Spleen (tissue), 13 donors: ENCODE measurements at regions of chr2 and their contacts with region 1.

Region 1: DNA sequence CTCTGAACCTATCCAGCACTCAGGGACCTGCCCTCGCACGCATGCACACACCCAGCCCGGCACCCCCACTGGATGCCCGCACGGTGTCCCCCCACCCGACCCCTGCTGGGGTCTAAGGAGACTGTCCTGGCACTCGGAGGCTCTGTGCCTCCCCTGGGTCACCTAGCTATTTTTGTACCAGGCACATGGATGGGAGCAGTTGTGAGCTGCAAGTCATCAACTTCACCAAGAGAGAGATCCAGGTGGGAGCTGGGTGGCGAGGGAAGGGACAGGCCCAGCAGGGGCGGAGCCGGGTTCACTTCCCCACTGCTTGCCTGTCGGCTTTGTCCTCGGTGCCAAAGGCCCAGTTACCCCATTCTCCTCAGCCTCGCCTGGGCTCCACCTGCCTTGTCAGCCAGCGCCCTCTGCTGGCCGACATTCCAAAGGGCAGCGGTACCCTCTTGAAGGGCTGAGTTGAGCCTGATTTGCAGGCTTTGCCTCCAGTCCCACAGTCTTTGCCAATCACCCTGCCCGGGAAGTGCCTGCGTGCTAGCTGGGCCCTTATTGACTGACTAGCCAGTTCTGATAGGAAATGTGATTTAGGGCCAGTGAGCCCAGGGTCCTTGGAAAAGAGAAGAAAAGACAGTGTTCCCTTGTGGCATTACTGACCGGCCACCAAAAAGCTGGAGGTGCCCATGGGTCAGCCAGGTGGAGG is 5.8 kb downstream of the NT5DC4 start:
- DNase-seq: peak; percentile 99
- H3K4me3 ChIP-seq: no peak overlapping the region
- H3K27ac ChIP-seq: peak overlapping the region in 1 of 8 donors; percentile 65
- H3K4me1 ChIP-seq: peaks cover 6 to 61% (median 29%) of the 10 kb centered on the region in 6 donors
- H3K27me3 ChIP-seq: no peaks in the 10 kb centered on the region
- CTCF ChIP-seq: peak; percentile 93 to 99 (median 98)
- POLR2A ChIP-seq: no peak

Region 2: DNA sequence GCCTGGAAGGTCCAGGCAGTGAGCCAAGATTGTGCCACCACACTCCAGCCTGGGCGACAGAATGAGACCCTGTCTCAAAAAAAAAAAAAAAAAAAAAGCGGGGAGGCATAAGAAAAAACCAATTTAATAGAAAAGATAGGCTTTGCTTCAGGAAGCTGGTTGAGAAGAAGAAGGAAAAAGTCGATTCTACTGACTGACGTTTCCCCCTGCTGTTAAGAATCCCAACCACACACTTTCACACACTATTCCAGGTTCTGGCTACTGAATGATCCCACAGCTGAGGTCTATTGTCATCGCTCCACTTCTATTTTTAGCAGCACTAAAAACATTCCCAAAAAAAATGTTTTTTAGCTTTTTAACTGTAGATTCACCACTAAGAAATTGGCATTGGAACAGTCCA is 148.9 kb before region 1 on chr2:
- intact Hi-C with region 1: no loop called
- DNase-seq: no peak
- H3K4me3 ChIP-seq: no peak overlapping the region
- H3K27ac ChIP-seq: no peak overlapping the region
- H3K4me1 ChIP-seq: peaks cover 0 to 7% (median 3%) of the 10 kb centered on the region in 6 donors
- H3K27me3 ChIP-seq: no peaks in the 10 kb centered on the region
- CTCF ChIP-seq: no peak
- POLR2A ChIP-seq: no peak

Region 3: DNA sequence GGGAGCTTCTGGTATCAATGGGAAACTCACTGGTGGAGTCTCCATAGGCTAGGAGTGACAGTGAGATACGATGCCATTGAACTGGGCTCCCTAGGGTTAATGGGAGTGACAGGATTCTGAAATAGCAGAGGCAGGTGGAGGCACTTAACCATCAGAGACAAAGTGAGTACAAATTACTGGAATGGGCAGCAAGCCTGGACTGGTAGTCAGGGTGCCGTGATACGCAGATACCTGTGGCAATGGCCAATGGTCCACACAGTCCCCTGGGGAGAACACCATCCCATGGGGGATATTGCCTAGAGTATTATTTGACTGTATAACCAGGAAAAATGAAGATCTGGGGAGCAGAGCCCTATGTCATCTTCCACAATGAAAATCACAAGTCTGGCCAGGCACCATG is 124.9 kb before region 1 on chr2:
- intact Hi-C with region 1: loop called (anchors 5 kb)
- DNase-seq: peak; percentile 35
- H3K4me3 ChIP-seq: no peak overlapping the region
- H3K27ac ChIP-seq: no peak overlapping the region
- H3K4me1 ChIP-seq: peaks cover 6 to 12% (median 8%) of the 10 kb centered on the region in 6 donors
- H3K27me3 ChIP-seq: no peaks in the 10 kb centered on the region
- CTCF ChIP-seq: no peak
- POLR2A ChIP-seq: no peak

Region 4: DNA sequence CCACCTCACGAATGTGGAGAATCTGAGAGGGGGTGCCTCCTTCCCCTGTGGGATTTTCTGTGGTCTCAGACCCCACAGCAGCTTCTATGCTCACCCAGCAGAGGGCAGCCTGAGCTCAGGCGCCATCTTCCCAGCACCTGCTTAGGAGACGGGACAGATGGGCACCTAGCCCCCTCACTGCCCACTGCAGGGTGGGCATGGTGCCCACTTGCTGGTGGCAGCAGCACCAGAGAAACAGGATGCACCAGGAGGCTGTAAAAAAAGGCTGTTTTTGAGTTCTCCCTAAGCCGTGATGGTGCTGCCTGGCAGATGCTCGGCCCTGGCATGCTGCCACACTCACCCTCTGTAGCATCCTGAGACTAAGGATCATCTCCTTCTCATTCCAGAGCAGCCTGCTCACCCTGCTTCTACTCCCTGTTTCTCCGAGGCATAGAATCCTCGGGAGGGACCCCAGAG is 100.0 kb before region 1 on chr2:
- intact Hi-C with region 1: loop called (anchors 5 kb)
- DNase-seq: peak; percentile 91
- H3K4me3 ChIP-seq: peak overlapping the region in 5 of 8 donors; percentile 1 to 60 (median 21)
- H3K27ac ChIP-seq: peak overlapping the region in 7 of 8 donors; percentile 36 to 83 (median 66)
- H3K4me1 ChIP-seq: peaks cover 10 to 72% (median 47%) of the 10 kb centered on the region in 6 donors
- H3K27me3 ChIP-seq: no peaks in the 10 kb centered on the region
- CTCF ChIP-seq: peak; percentile 70 to 91 (median 83)
- POLR2A ChIP-seq: no peak